Activated naive CD4-positive, alpha-beta T cell treated with anti-CD3 and anti-CD28 coated beads, Interleukin-2, amount 10 ng/mL, durations not matched to agents 7 days and 5 days (primary cell): ENCODE measurements at regions of chr2 and their contacts with region 1.

Region 1: DNA sequence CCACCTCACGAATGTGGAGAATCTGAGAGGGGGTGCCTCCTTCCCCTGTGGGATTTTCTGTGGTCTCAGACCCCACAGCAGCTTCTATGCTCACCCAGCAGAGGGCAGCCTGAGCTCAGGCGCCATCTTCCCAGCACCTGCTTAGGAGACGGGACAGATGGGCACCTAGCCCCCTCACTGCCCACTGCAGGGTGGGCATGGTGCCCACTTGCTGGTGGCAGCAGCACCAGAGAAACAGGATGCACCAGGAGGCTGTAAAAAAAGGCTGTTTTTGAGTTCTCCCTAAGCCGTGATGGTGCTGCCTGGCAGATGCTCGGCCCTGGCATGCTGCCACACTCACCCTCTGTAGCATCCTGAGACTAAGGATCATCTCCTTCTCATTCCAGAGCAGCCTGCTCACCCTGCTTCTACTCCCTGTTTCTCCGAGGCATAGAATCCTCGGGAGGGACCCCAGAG is 19.1 kb upstream of the SLC20A1 start:
- DNase-seq: peak; percentile 74
- H3K4me3 Mint-ChIP-seq: peak overlapping the region; percentile 49
- H3K27ac Mint-ChIP-seq: peak overlapping the region; percentile 96
- H3K4me1 Mint-ChIP-seq: peaks cover 87% of the 10 kb centered on the region
- H3K27me3 Mint-ChIP-seq: peaks cover 5% of the 10 kb centered on the region

Region 2: DNA sequence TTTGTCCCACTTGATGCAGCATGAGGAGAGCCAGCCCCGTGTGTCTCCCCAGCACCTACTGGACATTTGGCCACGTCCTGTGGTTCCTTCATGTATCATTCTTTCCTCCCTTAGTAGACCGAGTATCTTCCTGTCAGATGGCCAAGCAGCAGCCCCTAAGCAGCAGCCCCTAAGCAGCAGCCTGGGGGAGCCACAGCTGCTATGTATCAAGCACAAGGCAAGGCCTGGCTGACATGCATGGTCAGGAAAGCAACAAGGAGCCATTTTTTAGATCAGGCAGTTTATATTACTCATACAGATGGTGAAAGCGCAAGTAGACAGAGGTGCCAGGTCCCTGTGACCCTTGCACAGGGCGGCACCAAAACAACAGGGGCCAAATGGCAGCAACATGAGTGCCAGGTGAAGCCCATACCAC is 20.1 kb before region 1 on chr2:
- CTCF ChIA-PET with region 1: interaction called, 49 read pairs
- DNase-seq: no peak
- H3K4me3 Mint-ChIP-seq: no peak overlapping the region
- H3K27ac Mint-ChIP-seq: no peak overlapping the region
- H3K4me1 Mint-ChIP-seq: no peaks in the 10 kb centered on the region
- H3K27me3 Mint-ChIP-seq: peaks cover 16% of the 10 kb centered on the region

Region 3: DNA sequence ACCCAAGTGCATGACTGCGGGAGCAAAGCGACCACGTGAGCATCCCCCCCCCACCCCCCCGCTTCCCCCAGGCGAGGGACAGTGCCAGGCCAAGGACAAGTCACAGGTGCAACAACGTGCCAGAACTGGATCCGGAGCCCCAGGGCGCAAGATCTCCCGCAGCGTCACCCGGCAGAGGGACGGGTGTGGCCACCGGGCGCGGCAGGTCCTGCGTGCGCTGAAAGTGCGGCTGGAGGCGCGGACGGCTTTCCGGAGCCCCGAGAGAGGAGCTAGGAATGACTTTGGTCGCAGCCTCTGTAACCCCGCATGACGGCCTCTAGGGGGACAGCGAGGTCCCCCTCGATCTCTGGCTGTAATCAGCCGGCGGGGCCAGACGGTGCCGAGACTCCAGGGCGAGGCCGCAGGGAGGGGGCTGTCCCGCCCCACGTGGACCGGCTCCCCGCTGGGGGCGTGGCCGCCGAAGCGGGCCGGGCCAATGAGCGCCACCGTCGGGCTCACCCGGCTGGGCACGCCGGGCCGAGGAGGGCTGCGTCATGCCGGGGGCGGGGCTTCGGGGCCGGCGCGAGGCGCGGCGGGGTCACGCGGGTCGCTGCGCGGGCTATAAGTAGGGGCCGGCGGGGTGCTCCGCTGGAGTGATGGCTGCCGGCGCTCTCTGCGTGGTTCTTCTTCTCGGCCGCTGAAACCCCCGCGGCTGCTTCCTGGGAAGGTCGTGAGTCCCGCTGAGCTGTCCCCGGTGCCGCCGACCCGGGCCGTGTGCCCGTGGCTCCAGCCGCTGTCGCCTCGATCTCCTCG is 18.9 kb after region 1 on chr2 and contains the start of gene SLC20A1:
- CTCF ChIA-PET with region 1: interaction called, 154 read pairs
- DNase-seq: peak; percentile 98
- H3K4me3 Mint-ChIP-seq: peak within 1 kb of the TSS; percentile 99
- H3K27ac Mint-ChIP-seq: peak within 1 kb of the TSS; percentile 93
- H3K4me1 Mint-ChIP-seq: peaks cover 69% of the 10 kb centered on the region
- H3K27me3 Mint-ChIP-seq: no peaks in the 10 kb centered on the region

Region 4: GRCh38 chr2:112658820-112659667 is 32.4 kb after region 1 on chr2:
- CTCF ChIA-PET with region 1: interaction called, 12 read pairs
- DNase-seq: no peak
- H3K4me3 Mint-ChIP-seq: no peak overlapping the region
- H3K27ac Mint-ChIP-seq: peak overlapping the region; percentile 42
- H3K4me1 Mint-ChIP-seq: peaks cover 59% of the 10 kb centered on the region
- H3K27me3 Mint-ChIP-seq: no peaks in the 10 kb centered on the region

Region 5: GRCh38 chr2:112692496-112692911 is 65.9 kb after region 1 on chr2:
- CTCF ChIA-PET with region 1: interaction called, 46 read pairs
- DNase-seq: peak; percentile 77
- H3K4me3 Mint-ChIP-seq: no peak overlapping the region
- H3K27ac Mint-ChIP-seq: peak overlapping the region; percentile 75
- H3K4me1 Mint-ChIP-seq: peaks cover 32% of the 10 kb centered on the region
- H3K27me3 Mint-ChIP-seq: peaks cover 27% of the 10 kb centered on the region

Region 6: GRCh38 chr2:112706170-112706664 is 79.6 kb after region 1 on chr2:
- CTCF ChIA-PET with region 1: interaction called, 11 read pairs
- DNase-seq: peak; percentile 87
- H3K4me3 Mint-ChIP-seq: no peak overlapping the region
- H3K27ac Mint-ChIP-seq: peak overlapping the region; percentile 62
- H3K4me1 Mint-ChIP-seq: peaks cover 46% of the 10 kb centered on the region
- H3K27me3 Mint-ChIP-seq: peaks cover 39% of the 10 kb centered on the region